Right ventricle myocardium inferior (tissue), 1 donor: ENCODE measurements at regions of chr11 and their contacts with region 1.

Region 1: DNA sequence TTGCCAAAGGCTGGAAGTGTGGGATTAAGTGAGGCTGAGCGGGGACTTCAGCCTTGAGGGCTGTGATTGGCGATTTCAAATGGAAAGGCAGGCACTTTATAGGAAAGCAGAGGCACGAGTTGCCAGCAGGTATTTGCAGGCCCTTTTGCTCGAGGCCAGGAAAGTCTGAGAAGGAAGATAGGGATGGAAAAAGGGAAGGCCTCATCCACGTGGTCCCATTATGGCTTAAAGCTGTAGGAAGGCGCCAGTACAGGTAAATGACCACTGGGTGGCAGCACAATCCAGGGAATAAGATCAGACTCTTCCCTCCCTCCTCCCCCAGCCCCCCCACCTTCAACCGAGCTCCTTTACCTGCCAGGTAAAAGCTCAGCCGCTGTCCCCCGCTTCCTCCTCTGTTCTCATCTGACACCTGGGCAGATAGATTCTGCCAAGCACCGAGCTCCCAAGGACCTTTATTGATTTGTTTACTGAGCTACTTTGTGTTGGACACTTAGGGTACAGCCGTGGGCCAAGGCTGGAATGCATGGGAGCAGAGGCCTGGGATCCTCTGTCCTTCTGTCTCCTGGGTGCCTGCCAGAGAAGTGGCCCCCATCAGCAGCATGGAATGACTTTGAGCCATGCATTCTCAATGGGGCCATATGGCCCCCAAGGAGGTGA is 7.5 kb downstream of the P2RX3 start:
- DNase-seq: no peak
- ATAC-seq: peak; percentile 69

Region 2: DNA sequence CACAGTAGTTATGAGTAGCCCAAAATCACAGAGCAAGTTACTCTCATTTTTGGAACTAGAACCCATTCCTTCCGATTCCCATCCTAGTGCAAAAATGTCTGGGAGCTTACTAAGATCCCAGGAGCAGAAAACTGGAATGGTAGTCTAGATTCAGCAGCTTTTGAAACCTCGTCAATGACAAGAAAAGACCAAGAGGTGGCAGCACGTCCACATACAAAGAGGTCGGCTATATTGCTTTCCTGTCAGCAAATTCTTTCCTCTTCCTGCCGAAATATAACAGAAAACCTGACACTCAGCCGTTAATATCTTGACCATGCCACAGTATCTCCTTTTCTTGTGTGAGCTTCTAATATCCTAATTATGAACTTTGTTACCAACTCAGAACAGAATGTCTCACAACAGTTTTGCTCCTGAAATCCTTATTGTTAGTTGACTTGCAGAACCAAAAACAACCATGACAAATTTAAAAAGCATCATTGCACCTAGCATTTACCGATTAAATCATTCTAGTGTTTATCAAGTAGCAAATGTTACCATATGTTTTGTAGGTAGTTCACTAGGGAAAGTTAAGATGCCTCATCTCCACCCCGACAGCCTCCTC is 504.4 kb before region 1 on chr11:
- intact Hi-C with region 1: loop called (anchors 10 kb)
- DNase-seq: no peak
- ATAC-seq: peak; percentile 46

Region 3: DNA sequence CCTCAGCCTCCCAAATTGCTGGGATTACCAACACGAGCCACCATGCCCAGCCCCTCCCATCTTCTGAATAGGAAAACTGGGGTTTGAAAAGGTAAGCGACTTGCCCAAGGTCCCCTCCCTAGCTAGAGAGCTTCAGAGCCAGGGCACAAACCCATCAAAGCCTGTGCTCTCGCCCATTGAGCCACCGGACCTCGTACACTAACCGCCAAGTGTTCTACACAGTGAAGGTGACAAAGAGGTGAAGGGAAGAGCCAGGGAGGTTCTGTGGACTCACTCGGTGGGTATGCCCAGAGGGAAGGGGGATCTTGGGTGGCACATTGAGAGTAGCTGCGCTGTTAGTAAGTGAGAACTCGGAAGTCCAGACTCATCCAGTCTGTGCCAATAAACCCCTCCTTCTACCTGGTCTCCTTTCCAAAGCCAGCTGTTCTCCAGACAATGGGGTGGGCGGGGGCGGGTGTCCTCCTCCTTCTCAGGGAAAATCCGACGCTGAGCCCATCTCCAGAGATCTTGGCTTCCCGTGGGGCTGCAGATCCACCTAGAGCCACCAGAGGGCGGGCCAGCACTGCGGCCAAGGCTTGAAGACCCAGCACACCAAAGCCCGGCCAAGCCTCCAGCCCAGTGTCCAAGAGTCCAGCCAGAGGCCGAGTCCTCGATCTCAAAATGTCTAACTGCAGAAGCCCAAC is 111.4 kb after region 1 on chr11:
- intact Hi-C with region 1: loop called (anchors 5 kb)
- DNase-seq: peak; percentile 95
- ATAC-seq: peak; percentile 89

Region 4: DNA sequence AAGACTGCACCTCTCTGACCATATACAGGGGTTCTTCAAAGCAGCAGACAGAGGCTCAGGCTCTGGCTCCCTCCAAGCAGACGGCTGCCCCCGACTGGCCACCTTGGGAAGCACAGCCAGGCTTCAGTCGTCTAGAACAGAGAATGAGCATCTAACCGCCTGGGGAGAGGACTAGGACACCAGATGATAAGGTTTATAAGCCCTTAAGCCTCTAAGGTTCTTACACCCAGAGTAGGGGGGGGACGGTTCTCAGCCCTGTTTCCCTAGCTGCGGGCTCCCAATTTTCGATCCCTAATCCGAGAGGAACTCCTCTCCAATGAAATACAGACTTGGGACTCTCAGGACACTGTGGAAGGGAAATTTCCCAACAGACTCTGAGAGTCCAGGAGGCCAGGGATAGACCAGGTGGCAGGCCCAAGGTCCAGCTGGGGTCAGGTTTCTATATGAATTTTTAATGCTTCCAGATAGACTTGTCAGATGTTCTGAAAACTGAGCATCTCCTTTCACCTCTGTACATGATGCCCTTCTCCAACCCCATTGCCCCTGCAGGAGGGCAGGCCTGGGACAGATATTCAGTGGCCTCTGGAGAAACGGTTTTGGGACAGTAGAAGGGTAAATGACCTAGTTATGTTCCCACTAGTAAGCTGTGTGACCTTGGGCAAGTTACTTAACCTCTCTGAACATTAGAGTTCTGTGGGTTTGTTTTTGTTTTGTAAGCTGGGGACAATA is 134.9 kb after region 1 on chr11:
- intact Hi-C with region 1: loop called (anchors 1 kb)
- DNase-seq: no peak
- ATAC-seq: peak; percentile 29

Region 5: DNA sequence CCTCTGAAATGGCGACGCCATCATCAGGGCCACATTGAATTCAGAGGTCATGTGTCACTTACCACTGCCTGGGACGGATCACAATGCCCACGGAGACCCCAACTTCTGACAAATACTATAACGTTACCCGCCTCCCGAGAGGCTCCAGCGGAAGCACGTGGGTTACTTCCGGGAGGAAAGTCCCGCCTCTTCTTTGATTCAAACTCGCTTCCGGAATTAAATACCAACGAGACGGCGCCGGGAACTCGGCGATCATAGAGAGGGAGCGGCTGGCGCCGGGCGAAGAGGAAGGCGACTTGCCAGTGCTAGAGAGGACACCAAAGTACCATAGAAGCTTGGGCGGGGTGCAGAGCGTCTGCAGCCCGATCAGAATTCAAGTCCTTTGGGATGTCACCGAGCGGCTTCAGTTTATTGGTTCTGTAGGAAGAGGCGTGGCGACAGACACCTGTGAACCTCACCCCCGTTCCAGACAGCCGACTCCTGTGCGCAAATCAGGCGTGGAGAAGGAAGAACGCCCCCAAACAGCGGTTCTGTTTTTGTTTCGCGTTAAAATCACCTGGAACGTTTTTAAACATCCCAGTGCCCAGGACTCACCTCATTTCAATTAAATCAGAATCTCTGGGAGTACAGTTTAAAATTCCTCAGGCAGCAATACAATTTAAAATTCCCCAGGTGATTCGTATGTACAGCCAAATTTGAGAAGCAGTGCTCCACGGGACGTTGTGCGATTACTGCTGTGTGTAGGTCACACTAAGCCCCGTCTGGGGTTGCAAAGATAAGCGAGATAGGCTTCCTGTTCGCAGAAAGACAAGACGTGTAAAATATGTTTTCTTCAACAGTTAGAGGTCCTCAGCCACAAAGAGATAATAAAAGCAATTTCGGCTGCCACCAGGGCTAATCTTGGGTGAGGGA is 185.2 kb after region 1 on chr11 and contains the start of gene TIMM10:
- intact Hi-C with region 1: loop called (anchors 5 kb)
- DNase-seq: peak; percentile 98
- ATAC-seq: peak; percentile 99
- total RNA-seq, gene TIMM10: 58.1 TPM

Region 6: GRCh38 chr11:57644748-57645688 is 299.3 kb after region 1 on chr11:
- intact Hi-C with region 1: loop called (anchors 5 kb)
- DNase-seq: peak; percentile 88
- ATAC-seq: peak; percentile 76

Region 7: DNA sequence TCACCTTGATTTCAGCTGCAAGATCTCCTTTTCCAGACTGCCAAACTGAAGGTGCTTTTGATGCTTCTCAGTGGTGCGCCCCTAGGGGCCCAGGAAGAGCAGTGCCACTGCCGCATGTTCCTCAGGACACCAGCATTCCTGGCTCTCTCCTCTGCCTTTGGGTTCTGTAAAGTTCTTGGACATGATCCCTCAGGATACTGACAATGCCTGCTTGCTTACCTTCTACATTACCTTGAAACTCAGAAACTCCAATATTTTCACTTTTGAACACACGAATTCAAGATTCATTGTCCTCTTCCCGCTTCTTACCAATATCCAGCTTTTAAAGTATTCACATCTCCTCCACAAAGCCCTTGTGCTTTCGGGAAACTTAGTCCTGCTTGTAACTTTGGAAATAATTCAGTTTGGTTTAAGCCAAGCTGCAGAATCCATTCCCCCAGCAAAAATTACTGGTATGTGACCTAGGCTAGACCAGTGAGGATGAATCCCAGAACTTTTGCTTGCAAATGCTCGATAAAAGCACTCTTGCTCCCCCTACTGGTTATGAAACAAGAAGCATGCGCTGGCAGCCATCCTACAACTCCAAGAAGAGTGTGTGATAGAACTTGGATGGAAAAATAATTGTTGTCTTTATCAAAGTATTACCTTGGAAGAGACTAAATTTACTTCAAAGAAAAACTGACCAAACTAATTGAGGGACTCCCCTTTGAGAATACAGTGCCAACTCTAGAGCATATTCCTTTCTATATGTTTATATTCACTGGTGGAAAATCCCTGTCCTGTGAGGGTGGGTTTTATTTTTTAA is 1178.8 kb after region 1 on chr11:
- intact Hi-C with region 1: loop called (anchors 10 kb)
- DNase-seq: no peak
- ATAC-seq: peak; percentile 75